ENCODE measurements at regions of chr2 and their contacts with region 1.

Region 1: GRCh38 chr2:148644883-148645538 is 460 bp downstream of the EPC2 start:
- DNase-seq: peak; percentile 96
- H3K4me3 Mint-ChIP-seq: peak overlapping the region; percentile 86
- H3K27ac Mint-ChIP-seq: peak overlapping the region; percentile 98
- H3K4me1 Mint-ChIP-seq: peaks cover 36% of the 10 kb centered on the region
- H3K27me3 Mint-ChIP-seq: peaks cover 10% of the 10 kb centered on the region

Region 2: GRCh38 chr2:148020111-148021058 is 624.6 kb before region 1 on chr2 and contains the start of gene ORC4:
- CTCF ChIA-PET with region 1: interaction called, 5 read pairs
- POLR2A ChIA-PET with region 1: interaction called, 3 read pairs
- intact Hi-C with region 1: loop called (anchors 1 kb)
- DNase-seq: peak; percentile 99
- H3K4me3 Mint-ChIP-seq: peak within 1 kb of the TSS; percentile 100
- H3K27ac Mint-ChIP-seq: peak within 1 kb of the TSS; percentile 97
- H3K4me1 Mint-ChIP-seq: peaks cover 39% of the 10 kb centered on the region
- H3K27me3 Mint-ChIP-seq: no peaks in the 10 kb centered on the region
- total RNA-seq, gene ORC4: 34.1 to 34.9 TPM

Region 3: DNA sequence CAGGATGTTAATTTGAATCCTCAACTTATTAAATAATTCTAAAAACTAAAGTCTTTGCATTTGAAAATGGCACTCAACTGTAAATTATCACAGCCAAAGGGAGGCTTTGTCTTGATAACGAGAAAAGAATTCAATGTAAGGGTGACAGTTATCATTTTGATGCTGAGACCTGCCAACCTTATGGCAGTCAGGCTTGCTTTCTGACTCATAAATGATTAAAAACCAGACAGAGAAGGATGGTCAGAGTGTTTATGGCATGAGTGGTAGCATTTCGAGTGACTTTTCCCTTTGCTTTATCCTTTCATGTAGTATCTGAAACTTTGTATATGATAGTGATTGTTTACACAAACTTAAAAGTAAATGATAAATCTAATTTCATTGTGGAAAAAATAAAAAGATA is 54.4 kb before region 1 on chr2:
- CTCF ChIA-PET with region 1: no interaction called
- POLR2A ChIA-PET with region 1: no interaction called
- intact Hi-C with region 1: loop called (anchors 1 kb)
- DNase-seq: no peak
- H3K4me3 Mint-ChIP-seq: no peak overlapping the region
- H3K27ac Mint-ChIP-seq: no peak overlapping the region
- H3K4me1 Mint-ChIP-seq: no peaks in the 10 kb centered on the region
- H3K27me3 Mint-ChIP-seq: no peaks in the 10 kb centered on the region

Region 4: GRCh38 chr2:148658807-148659722 is 14.1 kb after region 1 on chr2:
- CTCF ChIA-PET with region 1: interaction called, 8 read pairs
- POLR2A ChIA-PET with region 1: interaction called, 4 read pairs
- intact Hi-C with region 1: loop called (anchors 1 kb)
- DNase-seq: no peak
- H3K4me3 Mint-ChIP-seq: peak overlapping the region; percentile 35
- H3K27ac Mint-ChIP-seq: peak overlapping the region; percentile 75
- H3K4me1 Mint-ChIP-seq: peaks cover 74% of the 10 kb centered on the region
- H3K27me3 Mint-ChIP-seq: no peaks in the 10 kb centered on the region

Region 5: GRCh38 chr2:148687543-148687942 is 42.5 kb after region 1 on chr2:
- CTCF ChIA-PET with region 1: no interaction called
- POLR2A ChIA-PET with region 1: no interaction called
- intact Hi-C with region 1: no loop called
- DNase-seq: no peak
- H3K4me3 Mint-ChIP-seq: no peak overlapping the region
- H3K27ac Mint-ChIP-seq: no peak overlapping the region
- H3K4me1 Mint-ChIP-seq: peaks cover 47% of the 10 kb centered on the region
- H3K27me3 Mint-ChIP-seq: no peaks in the 10 kb centered on the region

Region 6: DNA sequence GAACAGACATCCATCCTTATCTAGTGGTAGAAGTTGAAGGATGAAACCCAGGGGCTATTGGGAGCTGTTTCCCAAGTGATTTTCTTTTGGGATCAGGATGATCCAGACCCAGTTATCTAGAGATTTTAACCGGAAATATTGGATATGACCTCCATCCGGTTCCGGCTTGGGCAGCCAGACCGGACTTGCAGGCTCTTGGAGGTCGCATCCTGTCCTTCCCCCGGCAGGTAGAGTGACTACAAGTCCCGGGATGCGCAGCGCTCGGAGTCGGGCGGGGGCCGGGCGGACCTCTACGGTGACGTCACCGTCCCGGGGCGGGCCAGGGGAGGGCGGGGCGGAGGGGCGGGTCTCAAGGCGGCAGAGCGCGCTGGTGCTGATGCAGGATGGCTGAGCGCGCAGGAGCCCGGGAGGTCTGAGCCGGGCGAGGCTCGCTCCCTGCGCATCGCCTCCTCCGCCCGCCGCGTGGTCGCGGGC is 229.9 kb after region 1 on chr2 and contains the start of gene KIF5C:
- CTCF ChIA-PET with region 1: interaction called, 3 read pairs
- POLR2A ChIA-PET with region 1: no interaction called
- intact Hi-C with region 1: loop called (anchors 1 kb)
- DNase-seq: peak; percentile 96
- H3K4me3 Mint-ChIP-seq: peak within 1 kb of the TSS; percentile 86
- H3K27ac Mint-ChIP-seq: peak within 1 kb of the TSS; percentile 38
- H3K4me1 Mint-ChIP-seq: peaks cover 13% of the 10 kb centered on the region
- H3K27me3 Mint-ChIP-seq: peaks cover 11% of the 10 kb centered on the region
- total RNA-seq, gene KIF5C: 25.2 to 30.8 TPM